ENCODE measurements at regions of chr6 and their contacts with region 1.

Region 1: DNA sequence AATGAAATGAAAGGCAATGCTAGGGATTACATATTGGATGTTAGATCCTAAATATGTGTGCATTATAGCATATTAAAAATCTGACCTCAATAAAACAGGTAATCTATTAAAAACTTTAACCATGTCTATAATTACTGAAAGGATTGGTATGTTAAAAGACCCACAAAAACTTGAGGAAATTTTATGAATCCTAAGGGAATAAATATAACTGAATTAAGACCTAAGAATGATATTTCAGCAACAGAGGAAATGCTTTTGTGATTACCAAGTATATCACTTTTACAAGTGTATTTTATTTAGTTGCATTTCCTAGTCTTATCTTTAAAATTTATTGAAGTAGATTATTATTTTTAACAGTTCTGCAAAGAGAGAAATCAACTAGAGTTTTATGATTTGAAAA is 571.5 kb downstream of the HDGFL1 start:
- DNase-seq: no peak
- H3K4me3 ChIP-seq: no peak overlapping the region
- H3K27ac ChIP-seq: no peak overlapping the region
- H3K4me1 ChIP-seq: no peaks in the 10 kb centered on the region
- H3K27me3 ChIP-seq: no peaks in the 10 kb centered on the region
- CTCF ChIP-seq: no peak
- POLR2A ChIP-seq: no peak

Region 2: DNA sequence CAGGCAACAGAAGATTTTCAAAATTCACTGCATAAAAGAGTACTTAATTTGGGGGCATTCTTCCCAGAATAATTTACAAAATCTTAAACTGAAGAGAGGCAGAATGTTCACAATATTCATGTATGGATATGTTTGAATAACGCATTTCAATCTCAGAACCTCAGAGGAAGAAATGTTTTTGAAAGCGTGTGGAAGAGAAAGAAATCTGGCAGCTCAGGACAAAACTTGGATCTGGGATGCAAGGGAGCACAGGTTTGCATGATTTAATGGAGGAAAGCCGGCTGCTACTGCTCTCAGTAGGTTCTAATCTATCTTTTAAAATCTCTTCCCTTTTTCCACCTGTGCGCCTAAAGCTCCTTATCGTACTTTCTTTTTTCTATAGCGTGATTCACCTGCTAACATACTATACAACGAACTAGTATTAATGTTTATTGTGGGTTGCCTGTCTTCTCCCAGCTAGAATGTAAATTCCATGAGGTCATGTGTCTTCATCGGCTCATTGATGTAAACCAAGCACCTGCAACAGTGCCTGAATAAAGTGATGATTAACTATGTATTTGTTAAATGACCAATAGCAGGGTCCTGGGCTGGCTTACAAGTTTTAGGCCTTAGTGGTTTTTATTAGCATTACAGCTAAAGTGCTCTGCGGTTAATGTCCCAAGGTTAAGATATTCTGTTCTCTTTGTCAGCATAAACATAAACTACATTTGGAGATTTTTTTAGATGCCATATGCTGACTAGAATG is 859.4 kb before region 1 on chr6:
- intact Hi-C with region 1: loop called (anchors 5 kb)
- DNase-seq: no peak
- H3K4me3 ChIP-seq: no peak overlapping the region
- H3K27ac ChIP-seq: no peak overlapping the region
- H3K4me1 ChIP-seq: no peaks in the 10 kb centered on the region
- H3K27me3 ChIP-seq: no peaks in the 10 kb centered on the region
- CTCF ChIP-seq: no peak
- POLR2A ChIP-seq: no peak

Region 3: DNA sequence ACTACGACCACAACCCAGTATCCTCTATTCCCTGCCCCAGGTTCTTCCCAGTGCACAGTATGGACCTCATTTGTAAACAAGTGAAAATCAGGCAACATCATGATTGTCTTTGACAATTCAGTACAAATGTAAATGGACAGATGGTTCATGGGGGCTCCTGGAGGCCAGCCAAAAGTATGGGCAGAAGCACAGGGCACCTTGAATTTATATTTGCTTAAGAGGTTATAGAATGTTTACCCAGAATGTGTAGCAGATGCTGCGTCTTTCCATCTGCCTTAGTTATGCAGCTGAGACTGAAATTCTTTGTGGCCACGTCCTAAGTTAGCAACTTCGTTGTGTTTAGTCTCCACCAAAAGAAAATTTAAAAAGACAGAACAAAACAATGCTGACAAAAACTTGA is 425.5 kb after region 1 on chr6:
- intact Hi-C with region 1: no loop called
- DNase-seq: no peak
- H3K4me3 ChIP-seq: no peak overlapping the region
- H3K27ac ChIP-seq: no peak overlapping the region
- H3K4me1 ChIP-seq: no peaks in the 10 kb centered on the region
- H3K27me3 ChIP-seq: no peaks in the 10 kb centered on the region
- CTCF ChIP-seq: no peak
- POLR2A ChIP-seq: no peak